Naive thymus-derived CD4-positive, alpha-beta T cell (primary cell): ENCODE measurements at regions of chr11 and their contacts with region 1.

Region 1: GRCh38 chr11:64317957-64318693 is at the start of gene PRDX5:
- DNase-seq: peak; percentile 93 to 97 (median 96)
- ATAC-seq: peak; percentile 87
- H3K4me3 ChIP-seq: peak within 1 kb of the TSS; percentile 60
- H3K4me3 Mint-ChIP-seq: peak within 1 kb of the TSS; percentile 85 to 99 (median 96)
- H3K27ac ChIP-seq: peak within 1 kb of the TSS; percentile 92
- H3K27ac Mint-ChIP-seq: peak within 1 kb of the TSS; percentile 97 to 100 (median 100)
- H3K4me1 ChIP-seq: peaks cover 7 to 10% of the 10 kb centered on the region in 2 donors
- H3K4me1 Mint-ChIP-seq: peaks cover 20 to 40% (median 28%) of the 10 kb centered on the region in 7 donors
- H3K27me3 ChIP-seq: no peaks in the 10 kb centered on the region
- H3K27me3 Mint-ChIP-seq: no peaks in the 10 kb centered on the region
- total RNA-seq, gene PRDX5: 41.4 to 99.2 (median 55.2) TPM

Region 2: GRCh38 chr11:64185816-64186498 is 132.2 kb before region 1 on chr11 and contains the start of gene STIP1:
- CTCF ChIA-PET with region 1: interaction called, 3 read pairs
- POLR2A ChIA-PET with region 1: interaction called, 12 read pairs
- intact Hi-C with region 1: no loop called
- DNase-seq: peak; percentile 87 to 100 (median 99)
- ATAC-seq: peak; percentile 92
- H3K4me3 ChIP-seq: peak within 1 kb of the TSS; percentile 84
- H3K4me3 Mint-ChIP-seq: peak within 1 kb of the TSS in 9 of 10 donors; percentile 88 to 99 (median 96)
- H3K27ac ChIP-seq: peak within 1 kb of the TSS; percentile 82
- H3K27ac Mint-ChIP-seq: peak within 1 kb of the TSS in 7 of 9 donors; percentile 89 to 99 (median 92)
- H3K4me1 ChIP-seq: peaks cover 11 to 28% of the 10 kb centered on the region in 2 donors
- H3K4me1 Mint-ChIP-seq: peaks cover 19 to 58% (median 46%) of the 10 kb centered on the region in 7 donors
- H3K27me3 ChIP-seq: no peaks in the 10 kb centered on the region
- H3K27me3 Mint-ChIP-seq: peaks cover 0 to 6% (median 0%) of the 10 kb centered on the region in 5 donors
- total RNA-seq, gene STIP1: 45.1 to 243 (median 88.8) TPM

Region 3: DNA sequence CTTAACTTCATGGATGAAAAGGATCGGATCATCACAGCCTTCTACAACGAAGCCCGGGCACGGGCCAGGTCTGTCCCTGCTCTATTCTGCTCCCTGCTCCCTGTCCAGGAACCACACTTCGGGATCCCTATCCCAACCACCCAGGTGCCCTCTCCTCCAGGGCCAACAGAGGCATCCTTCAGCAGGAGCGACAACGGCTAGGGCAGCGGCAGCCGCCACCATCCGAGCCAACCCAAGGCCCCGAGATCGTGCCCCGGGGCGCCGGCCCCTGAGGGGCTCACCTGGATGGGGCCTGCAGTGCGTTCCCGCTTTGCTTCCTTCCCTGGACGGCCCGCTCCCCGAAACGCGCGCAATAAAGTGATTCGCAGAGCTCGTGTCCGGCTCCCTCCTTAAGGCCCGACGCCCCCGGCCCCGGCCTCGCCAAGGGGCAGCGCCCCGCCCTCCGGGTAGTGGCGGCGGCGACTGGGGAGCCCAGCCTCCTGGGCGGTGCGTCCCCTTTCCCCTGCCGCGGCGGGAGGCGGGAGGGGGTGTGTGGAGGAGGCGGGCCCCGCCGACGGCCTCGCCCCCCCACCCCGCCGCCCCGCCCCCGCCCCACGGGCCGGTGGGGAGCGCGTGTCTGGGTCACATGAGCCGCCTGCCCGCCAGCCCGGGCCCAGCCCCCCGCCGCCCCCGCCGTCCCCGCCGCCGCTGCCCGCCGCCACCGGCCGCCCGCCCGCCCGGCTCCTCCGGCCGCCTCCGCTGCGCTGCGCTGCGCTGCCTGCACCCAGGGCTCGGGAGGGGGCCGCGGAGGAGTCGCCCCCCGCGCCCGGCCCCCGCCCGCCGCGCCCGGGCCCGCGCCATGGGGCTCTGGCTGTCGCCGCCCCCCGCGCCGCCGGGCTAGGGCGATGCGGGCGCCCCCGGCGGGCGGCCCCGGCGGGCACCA is 84.0 kb before region 1 on chr11 and contains the start of gene VEGFB:
- CTCF ChIA-PET with region 1: no interaction called
- POLR2A ChIA-PET with region 1: interaction called, 10 read pairs
- intact Hi-C with region 1: no loop called
- DNase-seq: peak; percentile 48 to 81 (median 53)
- ATAC-seq: peak; percentile 72
- H3K4me3 ChIP-seq: peak within 1 kb of the TSS; percentile 56
- H3K4me3 Mint-ChIP-seq: peak within 1 kb of the TSS; percentile 74 to 90 (median 84)
- H3K27ac ChIP-seq: peak within 1 kb of the TSS; percentile 76
- H3K27ac Mint-ChIP-seq: peak within 1 kb of the TSS; percentile 72 to 96 (median 86)
- H3K4me1 ChIP-seq: peaks cover 21 to 31% of the 10 kb centered on the region in 2 donors
- H3K4me1 Mint-ChIP-seq: peaks cover 19 to 52% (median 44%) of the 10 kb centered on the region in 7 donors
- H3K27me3 ChIP-seq: no peaks in the 10 kb centered on the region
- H3K27me3 Mint-ChIP-seq: no peaks in the 10 kb centered on the region
- total RNA-seq, gene VEGFB: 30.6 to 99.5 (median 88.0) TPM

Region 4: DNA sequence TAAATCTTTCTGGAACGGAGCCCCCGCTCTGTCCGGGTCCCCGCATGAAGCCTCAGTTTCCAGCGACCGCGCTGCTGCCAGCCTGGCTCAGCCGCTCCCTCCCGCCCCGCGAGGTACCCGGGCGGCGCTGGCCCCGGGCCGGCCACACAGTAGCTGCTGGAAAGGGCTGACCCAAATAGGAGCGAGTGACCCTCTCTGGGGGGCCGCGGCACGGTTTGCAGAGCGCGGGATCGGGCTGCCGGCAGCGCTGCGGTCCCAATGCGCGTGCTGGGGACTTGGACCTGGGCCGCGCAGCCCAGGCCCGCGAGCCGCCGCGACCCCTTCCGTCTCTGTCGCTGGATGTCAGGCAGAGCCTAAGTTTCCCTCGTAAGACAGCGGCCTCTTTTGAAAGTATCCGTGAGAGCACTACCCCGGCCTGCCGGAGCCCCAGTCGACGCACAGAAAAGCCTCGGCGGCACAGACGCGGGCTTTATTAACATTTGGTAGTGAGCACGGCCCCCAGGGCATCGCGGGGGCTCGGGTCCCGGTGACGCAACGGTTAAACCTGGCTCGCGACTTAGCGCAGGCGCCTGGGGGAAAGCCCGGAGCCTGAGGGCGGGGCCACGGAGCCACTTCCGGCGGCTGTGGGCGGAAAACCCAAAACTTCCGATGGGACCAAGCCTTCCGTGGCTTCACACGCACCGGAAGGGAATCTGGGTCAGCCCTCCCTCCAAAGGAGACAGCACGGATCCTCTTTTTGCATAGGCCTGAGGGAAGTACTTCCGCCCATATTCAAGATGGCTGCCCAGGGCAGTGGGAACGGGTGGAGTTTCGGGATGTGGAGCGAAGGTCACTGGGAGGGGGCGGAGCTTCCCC is 48.5 kb before region 1 on chr11:
- CTCF ChIA-PET with region 1: interaction called, 6 read pairs
- POLR2A ChIA-PET with region 1: interaction called, 45 read pairs
- intact Hi-C with region 1: loop called (anchors 1 kb)
- DNase-seq: peak; percentile 89 to 98 (median 98)
- ATAC-seq: peak; percentile 82
- H3K4me3 ChIP-seq: peak overlapping the region; percentile 91
- H3K4me3 Mint-ChIP-seq: peak overlapping the region; percentile 95 to 100 (median 98)
- H3K27ac ChIP-seq: peak overlapping the region; percentile 95
- H3K27ac Mint-ChIP-seq: peak overlapping the region; percentile 94 to 99 (median 99)
- H3K4me1 ChIP-seq: peaks cover 8 to 10% of the 10 kb centered on the region in 2 donors
- H3K4me1 Mint-ChIP-seq: peaks cover 8 to 29% (median 24%) of the 10 kb centered on the region in 7 donors
- H3K27me3 ChIP-seq: no peaks in the 10 kb centered on the region
- H3K27me3 Mint-ChIP-seq: no peaks in the 10 kb centered on the region

Region 5: DNA sequence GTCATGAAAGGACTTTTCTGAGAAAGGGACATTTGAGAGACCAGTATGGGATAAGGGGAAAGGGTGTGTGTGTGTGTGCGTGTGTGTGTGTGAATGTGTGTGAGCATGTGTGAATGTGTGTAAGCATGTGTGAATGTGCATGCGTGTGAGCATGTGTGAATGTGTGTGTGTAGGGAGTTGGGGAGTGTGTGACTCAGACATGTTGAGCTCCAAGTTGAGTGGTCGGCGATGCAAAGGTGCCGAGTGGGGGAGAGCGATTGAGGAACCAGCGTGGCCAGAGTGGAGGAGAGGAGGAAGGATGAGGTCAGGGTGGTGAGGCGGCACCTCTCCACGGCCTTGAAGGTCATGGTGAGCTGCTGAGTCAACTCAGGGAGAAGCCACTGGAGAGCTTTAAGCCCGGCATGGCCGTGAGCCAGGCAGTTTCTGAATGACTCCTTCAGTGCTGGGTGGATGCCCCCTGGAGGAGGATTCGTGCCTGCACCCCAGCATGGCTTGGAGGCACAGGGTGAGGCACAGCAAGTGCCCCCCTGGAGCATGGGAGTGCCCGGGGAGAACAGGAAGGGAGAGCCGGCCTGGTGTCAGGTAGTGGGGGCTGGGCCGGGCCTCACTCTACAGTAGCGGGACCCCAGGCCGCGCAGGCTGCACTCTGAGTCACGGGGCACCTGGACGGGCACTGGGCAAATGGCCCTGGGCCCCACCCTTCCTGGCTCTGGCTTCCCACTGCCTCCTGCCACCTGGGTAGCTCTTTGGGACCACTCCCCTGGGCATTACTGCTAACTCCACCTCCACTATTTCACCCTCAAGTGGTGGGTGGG is 13.6 kb after region 1 on chr11:
- CTCF ChIA-PET with region 1: interaction called, 10 read pairs
- POLR2A ChIA-PET with region 1: interaction called, 15 read pairs
- intact Hi-C with region 1: loop called (anchors 1 kb)
- DNase-seq: peak; percentile 33 to 76 (median 49)
- ATAC-seq: peak; percentile 92
- H3K4me3 ChIP-seq: no peak overlapping the region
- H3K4me3 Mint-ChIP-seq: peak overlapping the region in 3 of 10 donors; percentile 1 to 31 (median 27)
- H3K27ac ChIP-seq: no peak overlapping the region
- H3K27ac Mint-ChIP-seq: peak overlapping the region in 6 of 9 donors; percentile 8 to 62 (median 33)
- H3K4me1 ChIP-seq: peaks cover 4 to 8% of the 10 kb centered on the region in 2 donors
- H3K4me1 Mint-ChIP-seq: peaks cover 0 to 14% (median 7%) of the 10 kb centered on the region in 7 donors
- H3K27me3 ChIP-seq: no peaks in the 10 kb centered on the region
- H3K27me3 Mint-ChIP-seq: no peaks in the 10 kb centered on the region

Region 6: DNA sequence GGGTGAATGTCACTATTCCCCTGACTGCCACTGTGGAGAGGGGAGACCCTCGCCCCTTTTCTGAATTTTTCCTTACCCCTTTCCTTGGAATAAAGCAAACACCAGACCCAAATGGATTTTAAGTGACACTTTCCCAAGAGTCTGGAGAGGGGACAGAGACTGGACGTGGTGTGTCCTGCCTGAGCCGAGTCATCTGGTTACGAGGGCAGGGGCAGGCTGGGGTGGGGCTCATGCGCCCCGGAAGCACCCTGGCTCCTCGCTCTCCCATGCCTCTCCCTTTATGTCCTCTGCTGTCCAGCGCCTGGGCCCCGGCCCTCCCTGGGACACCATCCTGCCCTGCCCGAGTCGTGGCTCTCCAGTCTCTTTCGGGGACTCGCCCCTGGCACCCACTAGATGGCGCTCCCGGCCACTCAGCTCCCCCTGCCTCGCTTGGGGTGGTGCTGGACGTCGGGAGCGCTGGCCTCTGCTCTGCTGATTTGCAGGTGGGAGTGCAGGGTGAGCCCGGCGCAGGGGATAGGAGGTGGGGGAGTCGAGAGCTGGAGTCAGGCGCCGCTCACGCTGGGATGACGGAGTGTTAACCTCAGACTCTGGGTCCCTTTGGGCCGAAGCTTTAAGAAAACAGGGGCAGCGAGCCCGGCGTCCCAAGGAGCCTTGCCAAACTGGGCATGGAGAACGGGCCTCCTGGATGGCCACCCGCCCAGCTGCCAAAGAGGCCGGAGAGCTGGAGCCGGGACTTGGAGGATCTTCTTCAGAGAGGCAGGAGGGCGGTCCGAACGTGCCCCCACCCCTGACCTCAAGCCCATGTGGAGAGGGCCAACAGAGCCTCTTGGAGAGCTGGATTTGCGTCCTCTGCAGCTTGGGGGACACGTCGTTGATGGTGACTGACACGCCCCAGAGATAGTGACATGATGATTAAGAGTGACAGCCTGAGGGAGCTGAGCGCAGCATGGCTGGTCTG is 130.8 kb after region 1 on chr11:
- CTCF ChIA-PET with region 1: no interaction called
- POLR2A ChIA-PET with region 1: no interaction called
- intact Hi-C with region 1: loop called in 1 of 2 experiments (anchors 1 kb)
- DNase-seq: peak; percentile 32 to 80 (median 58)
- ATAC-seq: peak; percentile 85
- H3K4me3 ChIP-seq: peak overlapping the region; percentile 68
- H3K4me3 Mint-ChIP-seq: peak overlapping the region; percentile 81 to 93 (median 86)
- H3K27ac ChIP-seq: no peak overlapping the region
- H3K27ac Mint-ChIP-seq: peak overlapping the region in 2 of 9 donors; percentile 75 to 76
- H3K4me1 ChIP-seq: peaks cover 15 to 17% of the 10 kb centered on the region in 2 donors
- H3K4me1 Mint-ChIP-seq: peaks cover 12 to 19% (median 17%) of the 10 kb centered on the region in 7 donors
- H3K27me3 ChIP-seq: peaks cover 0 to 6% of the 10 kb centered on the region in 2 donors
- H3K27me3 Mint-ChIP-seq: peaks cover 0 to 34% (median 15%) of the 10 kb centered on the region in 5 donors